MCF 10A (cell line): ENCODE measurements at regions of chr7 and their contacts with region 1.

Region 1: GRCh38 chr7:18655912-18656311 is 160.4 kb downstream of the HDAC9 start:
- DNase-seq: no peak
- H3K4me3 Mint-ChIP-seq: no peak overlapping the region
- H3K27ac Mint-ChIP-seq: no peak overlapping the region
- H3K4me1 Mint-ChIP-seq: no peaks in the 10 kb centered on the region
- H3K27me3 Mint-ChIP-seq: no peaks in the 10 kb centered on the region
- CTCF ChIP-seq: no peak

Region 2: DNA sequence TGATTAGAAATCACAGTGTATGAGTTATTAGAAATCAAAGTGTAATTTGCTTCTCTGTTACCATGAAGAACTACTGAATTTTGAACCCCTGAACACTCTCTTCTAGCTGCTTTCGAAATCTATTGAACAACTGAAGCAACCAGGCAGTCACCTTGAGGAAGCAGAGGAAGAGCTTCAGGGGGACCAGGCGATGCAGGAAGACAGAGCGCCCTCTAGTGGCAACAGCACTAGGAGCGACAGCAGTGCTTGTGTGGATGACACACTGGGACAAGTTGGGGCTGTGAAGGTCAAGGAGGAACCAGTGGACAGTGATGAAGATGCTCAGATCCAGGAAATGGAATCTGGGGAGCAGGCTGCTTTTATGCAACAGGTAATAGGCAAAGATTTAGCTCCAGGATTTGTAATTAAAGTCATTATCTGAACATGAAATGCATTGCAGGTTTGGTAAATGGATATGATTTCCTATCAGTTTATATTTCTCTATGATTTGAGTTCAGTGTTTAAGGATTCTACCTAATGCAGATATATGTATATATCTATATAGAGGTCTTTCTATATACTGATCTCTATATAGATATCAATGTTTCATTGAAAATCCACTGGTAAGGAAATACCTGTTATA is 10.3 kb after region 1 on chr7:
- CTCF ChIA-PET with region 1: interaction called, 22 read pairs
- POLR2A ChIA-PET with region 1: interaction called, 4 read pairs
- intact Hi-C with region 1: no loop called
- DNase-seq: peak; percentile 80
- H3K4me3 Mint-ChIP-seq: no peak overlapping the region
- H3K27ac Mint-ChIP-seq: no peak overlapping the region
- H3K4me1 Mint-ChIP-seq: peaks cover under 1% of the 10 kb centered on the region
- H3K27me3 Mint-ChIP-seq: no peaks in the 10 kb centered on the region
- CTCF ChIP-seq: peak; percentile 71

Region 3: GRCh38 chr7:18740579-18740988 is 84.7 kb after region 1 on chr7:
- CTCF ChIA-PET with region 1: no interaction called
- POLR2A ChIA-PET with region 1: no interaction called
- intact Hi-C with region 1: no loop called
- DNase-seq: no peak
- H3K4me3 Mint-ChIP-seq: no peak overlapping the region
- H3K27ac Mint-ChIP-seq: no peak overlapping the region
- H3K4me1 Mint-ChIP-seq: no peaks in the 10 kb centered on the region
- H3K27me3 Mint-ChIP-seq: no peaks in the 10 kb centered on the region
- CTCF ChIP-seq: no peak